ENCODE measurements at regions of chr15 and their contacts with region 1.

Region 1: GRCh38 chr15:69225355-69226025 is 65.1 kb downstream of the GLCE start:
- DNase-seq: peak; percentile 49
- ATAC-seq: peak; percentile 14; the same call in 1 of the 3 replicates
- H3K4me3 ChIP-seq: peak overlapping the region in 1 of 3 experiments; percentile 38; a peak in 1 of 6 replicates
- H3K27ac ChIP-seq: peak overlapping the region; percentile 74
- H3K4me1 ChIP-seq: peaks cover 52% of the 10 kb centered on the region
- H3K27me3 ChIP-seq: no peaks in the 10 kb centered on the region
- CTCF ChIP-seq: peak; percentile 71
- EP300 ChIP-seq: no peak
- POLR2A ChIP-seq: no peak
- RAD21 ChIP-seq: peak; percentile 66

Region 2: DNA sequence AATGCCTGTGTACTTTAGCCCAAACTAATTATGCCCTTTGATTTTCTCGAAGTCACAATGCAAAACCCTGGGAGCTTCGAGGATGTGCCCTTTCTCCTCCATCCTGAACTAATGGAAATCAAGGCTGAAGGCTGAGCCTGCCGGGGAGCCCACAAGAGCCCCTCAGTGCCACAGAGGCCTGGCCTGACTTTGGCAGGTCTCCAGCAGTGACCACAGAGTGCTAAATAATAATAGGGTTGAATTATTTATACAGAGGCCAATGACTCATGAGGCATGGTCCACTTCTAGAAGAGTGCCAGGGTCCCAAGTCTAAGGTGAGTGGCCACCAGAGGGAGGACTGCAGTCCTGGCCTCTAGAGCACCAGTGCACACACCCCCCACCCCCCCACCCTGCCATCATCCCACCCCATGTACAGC is 84.2 kb before region 1 on chr15:
- CTCF ChIA-PET with region 1: no interaction called
- POLR2A ChIA-PET with region 1: no interaction called
- in situ Hi-C with region 1: no loop called
- intact Hi-C with region 1: loop called (anchors 1 kb)
- DNase-seq: peak; percentile 28
- ATAC-seq: peak; percentile 66
- H3K4me3 ChIP-seq: no peak overlapping the region
- H3K27ac ChIP-seq: no peak overlapping the region
- H3K4me1 ChIP-seq: peaks cover 9% of the 10 kb centered on the region; the same call in 1 of the 2 replicates
- H3K27me3 ChIP-seq: no peaks in the 10 kb centered on the region
- CTCF ChIP-seq: peak; percentile 22; the same call in 1 of the 2 replicates
- EP300 ChIP-seq: no peak
- POLR2A ChIP-seq: no peak
- RAD21 ChIP-seq: no peak

Region 3: DNA sequence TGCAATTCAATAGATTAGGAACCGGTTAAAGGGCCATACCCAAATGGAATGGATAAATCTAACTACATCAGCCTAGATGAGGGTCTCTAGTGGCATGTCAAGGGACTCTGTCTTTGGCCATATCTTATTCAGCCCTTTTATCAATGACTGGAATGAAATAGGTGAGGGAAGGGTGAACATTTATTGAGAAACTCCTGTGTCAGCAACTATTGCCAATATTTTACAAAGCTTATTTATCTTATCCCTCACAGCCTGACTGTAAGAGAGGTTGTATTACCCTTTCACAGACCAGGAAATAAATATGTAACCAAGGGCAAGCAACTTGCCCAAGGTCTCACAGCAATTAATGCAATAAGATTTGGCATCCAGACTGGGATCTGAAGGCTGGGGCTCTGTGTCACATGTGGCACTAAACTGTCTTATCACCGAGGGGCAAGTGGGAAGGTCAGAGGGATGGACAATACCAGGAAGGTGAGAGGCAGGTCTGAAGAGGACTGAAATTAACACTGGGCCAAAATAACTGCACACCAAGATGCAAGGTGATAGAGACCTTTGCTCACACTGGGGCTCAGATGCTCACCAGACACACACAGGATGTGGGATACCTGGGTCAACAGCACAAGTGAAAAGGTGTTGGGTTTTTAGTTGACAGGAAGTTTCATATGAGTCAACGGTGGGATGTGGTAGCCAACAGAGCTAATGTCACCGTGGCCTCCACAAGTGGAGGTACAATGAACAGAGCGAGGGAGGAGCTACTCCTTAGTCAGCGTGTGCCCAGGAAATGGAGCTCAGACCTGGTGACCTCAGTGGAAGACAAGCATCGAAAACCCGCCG is 488.5 kb after region 1 on chr15:
- CTCF ChIA-PET with region 1: no interaction called
- POLR2A ChIA-PET with region 1: no interaction called
- in situ Hi-C with region 1: no loop called
- intact Hi-C with region 1: no loop called
- DNase-seq: no peak
- ATAC-seq: no peak
- H3K4me3 ChIP-seq: no peak overlapping the region
- H3K27ac ChIP-seq: no peak overlapping the region
- H3K4me1 ChIP-seq: peaks cover 12% of the 10 kb centered on the region
- H3K27me3 ChIP-seq: peaks cover 0 to 5% of the 10 kb centered on the region in 2 experiments; a peak in 1 of 5 replicates
- CTCF ChIP-seq: no peak
- EP300 ChIP-seq: no peak
- POLR2A ChIP-seq: no peak
- RAD21 ChIP-seq: no peak

Measured in HepG2 (cell line).